Right ventricle myocardium superior (tissue), 1 donor: ENCODE measurements at regions of chr7 and their contacts with region 1.

Region 1: GRCh38 chr7:141649865-141650634 is 51.9 kb downstream of the DENND11 start:
- DNase-seq: no peak
- ATAC-seq: peak; percentile 89

Region 2: GRCh38 chr7:141541375-141541774 is 108.7 kb before region 1 on chr7:
- intact Hi-C with region 1: loop called (anchors 10 kb)
- DNase-seq: no peak
- ATAC-seq: peak; percentile 22